Activated CD4-positive, alpha-beta T cell treated with anti-CD3 and anti-CD28 coated beads, Interleukin-2, amount 10 ng/mL, durations not matched to agents 24 days and 14 days (primary cell): ENCODE measurements at regions of chr1 and their contacts with region 1.

Region 1: DNA sequence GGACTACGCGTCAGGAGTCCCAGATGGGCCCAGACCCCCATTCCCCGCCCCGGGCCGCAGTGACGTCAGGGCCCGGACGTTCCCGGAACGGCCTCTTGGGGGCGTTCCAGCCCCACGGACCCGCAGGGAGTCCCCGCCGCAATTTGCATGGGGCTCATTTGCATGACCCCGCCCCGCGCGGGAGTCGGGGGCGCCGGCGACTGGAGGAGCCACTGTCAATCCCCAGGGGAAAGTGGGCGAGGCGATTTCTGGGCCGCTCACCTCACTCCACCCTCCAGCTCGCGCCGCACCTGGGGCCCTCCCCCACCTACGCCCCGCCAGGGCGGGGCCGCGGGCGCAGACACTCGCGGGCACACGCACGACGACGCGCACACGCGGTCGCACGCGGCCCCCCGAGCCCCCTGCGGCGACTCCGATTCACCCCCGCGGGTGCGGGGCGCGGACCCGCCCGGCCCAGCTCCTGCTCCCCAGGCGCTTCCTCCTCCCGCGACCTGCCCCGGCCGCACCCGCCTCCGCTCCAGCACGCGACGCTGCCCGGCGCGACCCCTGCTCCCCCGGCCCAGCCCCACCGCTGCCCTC is 13.2 kb downstream of the AGRN start:
- DNase-seq: peak; percentile 97
- H3K4me3 Mint-ChIP-seq: peak overlapping the region; percentile 51
- H3K27ac Mint-ChIP-seq: no peak overlapping the region
- H3K4me1 Mint-ChIP-seq: peaks cover 5% of the 10 kb centered on the region
- H3K27me3 Mint-ChIP-seq: peaks cover 11% of the 10 kb centered on the region

Region 2: GRCh38 chr1:993379-993995 is 39.6 kb before region 1 on chr1:
- intact Hi-C with region 1: no loop called
- DNase-seq: no peak
- H3K4me3 Mint-ChIP-seq: no peak overlapping the region
- H3K27ac Mint-ChIP-seq: no peak overlapping the region
- H3K4me1 Mint-ChIP-seq: peaks cover 9% of the 10 kb centered on the region
- H3K27me3 Mint-ChIP-seq: peaks cover 34% of the 10 kb centered on the region

Region 3: DNA sequence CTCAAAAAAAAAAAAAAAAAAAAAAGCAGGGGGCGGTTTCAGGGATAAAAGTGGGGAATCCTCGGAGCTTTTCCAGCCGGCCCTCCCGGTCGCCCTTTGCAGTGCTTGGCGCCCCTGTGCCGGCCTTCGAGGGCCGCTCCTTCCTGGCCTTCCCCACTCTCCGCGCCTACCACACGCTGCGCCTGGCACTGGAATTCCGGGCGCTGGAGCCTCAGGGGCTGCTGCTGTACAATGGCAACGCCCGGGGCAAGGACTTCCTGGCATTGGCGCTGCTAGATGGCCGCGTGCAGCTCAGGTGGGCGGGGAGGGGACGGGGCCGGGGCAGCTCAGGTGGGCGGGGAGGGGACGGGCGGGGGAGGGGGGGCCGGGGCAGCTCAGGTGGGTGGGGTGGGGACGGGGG is 15.7 kb after region 1 on chr1:
- intact Hi-C with region 1: no loop called
- DNase-seq: no peak
- H3K4me3 Mint-ChIP-seq: no peak overlapping the region
- H3K27ac Mint-ChIP-seq: no peak overlapping the region
- H3K4me1 Mint-ChIP-seq: no peaks in the 10 kb centered on the region
- H3K27me3 Mint-ChIP-seq: no peaks in the 10 kb centered on the region

Region 4: DNA sequence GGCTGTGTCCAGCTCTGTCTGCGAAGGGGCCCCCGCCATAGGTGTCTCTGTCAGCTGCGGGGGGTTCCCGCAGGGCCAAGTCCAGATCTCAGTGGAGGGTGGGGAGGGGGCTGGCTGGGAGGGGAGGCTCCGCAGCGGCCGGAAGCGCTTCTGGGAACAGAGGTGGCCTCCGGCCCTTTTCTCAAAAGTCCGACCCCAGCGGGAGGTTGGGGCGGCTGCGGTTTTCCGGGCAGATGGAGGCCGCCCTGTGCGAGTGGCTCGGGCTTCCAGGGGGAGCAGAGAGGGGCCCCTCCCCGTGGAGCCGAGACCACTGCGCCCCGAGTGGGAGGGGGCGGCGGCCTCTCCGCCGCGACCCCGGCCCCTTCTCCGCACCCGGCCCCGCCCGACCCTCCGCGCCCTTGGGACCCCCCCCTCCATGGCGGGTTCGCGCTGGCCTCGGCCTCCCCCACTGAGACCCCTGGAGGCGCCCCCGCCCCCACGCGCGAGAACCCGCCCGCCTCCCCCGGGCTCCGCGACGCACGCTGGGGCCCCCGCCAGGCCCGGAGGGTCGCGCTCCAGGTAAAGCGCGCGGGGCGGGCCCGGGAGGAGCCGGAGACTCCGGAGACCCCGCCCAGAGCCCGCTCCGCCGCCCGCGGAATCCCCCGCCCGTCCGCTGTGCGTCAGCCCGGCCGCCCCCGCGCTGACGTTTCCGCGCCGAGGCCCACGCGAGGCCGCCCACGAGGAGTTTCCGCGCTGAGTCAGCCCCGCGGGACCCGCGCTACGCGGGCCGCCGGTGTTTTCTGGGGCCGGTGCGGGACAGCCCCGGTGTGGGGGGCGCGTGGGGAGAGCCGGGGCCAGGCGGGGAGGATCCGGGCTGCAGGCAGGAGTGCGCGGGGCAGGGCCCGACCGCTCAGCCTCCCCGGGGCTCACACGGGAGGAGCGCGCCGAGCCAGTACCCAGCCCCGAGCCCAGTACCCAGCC is 168.0 kb after region 1 on chr1:
- intact Hi-C with region 1: loop called (anchors 10 kb)
- DNase-seq: peak; percentile 96
- H3K4me3 Mint-ChIP-seq: peak overlapping the region; percentile 69
- H3K27ac Mint-ChIP-seq: peak overlapping the region; percentile 88
- H3K4me1 Mint-ChIP-seq: peaks cover 9% of the 10 kb centered on the region
- H3K27me3 Mint-ChIP-seq: no peaks in the 10 kb centered on the region

Region 5: DNA sequence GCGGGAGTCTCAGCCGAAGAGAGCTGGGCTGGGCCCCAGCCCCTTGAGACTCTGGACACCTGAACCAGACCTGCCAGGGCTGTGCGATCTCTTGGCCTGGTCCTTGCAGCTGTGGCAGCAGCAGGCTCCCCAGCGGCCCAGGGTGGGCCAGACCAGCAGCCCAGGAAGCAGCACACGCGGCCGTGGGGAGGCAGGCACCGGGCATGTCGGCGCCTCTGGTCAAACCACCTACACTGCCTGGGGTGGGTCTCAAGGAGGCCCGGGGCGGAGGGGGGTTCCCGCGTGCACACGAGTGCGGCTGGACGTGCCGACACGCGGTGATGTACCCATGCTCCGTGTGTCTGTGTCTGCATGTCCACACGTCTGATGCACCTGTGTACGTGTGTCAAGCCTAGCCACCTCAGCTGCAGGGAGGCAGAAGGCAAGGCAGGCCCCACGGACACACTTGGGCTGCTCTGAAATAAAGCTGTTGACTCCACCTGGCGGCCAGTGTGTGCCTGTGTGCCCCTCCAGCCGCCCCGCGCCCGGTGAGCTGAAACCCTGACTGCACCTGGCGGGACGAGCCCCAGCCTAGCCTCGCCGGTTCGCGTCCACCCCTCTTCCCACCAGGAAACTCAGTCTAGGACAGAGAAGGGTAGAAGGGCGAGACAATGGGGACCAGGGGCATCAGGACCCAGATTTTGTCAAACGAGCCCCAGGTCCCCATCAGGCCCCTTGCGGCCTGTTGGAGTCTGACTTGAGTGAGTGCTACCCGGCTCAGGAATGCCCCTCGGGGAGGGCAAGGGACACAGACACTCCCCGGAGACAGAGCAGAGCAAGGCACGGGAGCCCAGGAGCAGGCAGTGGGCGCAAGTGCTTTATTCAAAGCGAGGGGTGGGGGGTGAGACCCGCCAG is 258.7 kb after region 1 on chr1:
- intact Hi-C with region 1: loop called (anchors 5 kb)
- DNase-seq: peak; percentile 89
- H3K4me3 Mint-ChIP-seq: no peak overlapping the region
- H3K27ac Mint-ChIP-seq: no peak overlapping the region
- H3K4me1 Mint-ChIP-seq: peaks cover 4% of the 10 kb centered on the region
- H3K27me3 Mint-ChIP-seq: no peaks in the 10 kb centered on the region